ENCODE measurements at regions of chr17 and their contacts with region 1.

Region 1: GRCh38 chr17:71472809-71473789 is 647.7 kb upstream of the SOX9 start:
- DNase-seq: peak; percentile 86
- ATAC-seq: peak; percentile 99
- H3K4me3 ChIP-seq: no peak overlapping the region
- H3K27ac ChIP-seq: no peak overlapping the region
- H3K4me1 ChIP-seq: peaks cover 0 to 11% of the 10 kb centered on the region in 2 experiments; a peak in 2 of 4 replicates
- H3K27me3 ChIP-seq: no peaks in the 10 kb centered on the region
- CTCF ChIP-seq: peak; percentile 79 to 93 (median 88)
- POLR2A ChIP-seq: no peak
- RAD21 ChIP-seq: peak; percentile 89

Region 2: GRCh38 chr17:70636517-70637133 is 836.5 kb before region 1 on chr17:
- CTCF ChIA-PET with region 1: no interaction called
- POLR2A ChIA-PET with region 1: no interaction called
- RAD21 ChIA-PET with region 1: no interaction called
- intact Hi-C with region 1: loop called (anchors 10 kb)
- DNase-seq: peak; percentile 54
- ATAC-seq: peak; percentile 63
- H3K4me3 ChIP-seq: no peak overlapping the region
- H3K27ac ChIP-seq: no peak overlapping the region
- H3K4me1 ChIP-seq: no peaks in the 10 kb centered on the region
- H3K27me3 ChIP-seq: no peaks in the 10 kb centered on the region
- CTCF ChIP-seq: peak; percentile 61 to 86 (median 70); a peak in 5 of 6 replicates
- POLR2A ChIP-seq: no peak
- RAD21 ChIP-seq: peak; percentile 91